Heart right ventricle (tissue), 16 donors: ENCODE measurements at regions of chr3 and their contacts with region 1.

Region 1: GRCh38 chr3:5032844-5033243 is 53.6 kb downstream of the BHLHE40 start:
- DNase-seq: no peak
- ATAC-seq: no peak
- H3K4me3 ChIP-seq: no peak overlapping the region
- H3K27ac ChIP-seq: no peak overlapping the region
- H3K4me1 ChIP-seq: peaks cover 0 to 12% (median 0%) of the 10 kb centered on the region in 9 donors
- H3K27me3 ChIP-seq: no peaks in the 10 kb centered on the region
- CTCF ChIP-seq: no peak

Region 2: DNA sequence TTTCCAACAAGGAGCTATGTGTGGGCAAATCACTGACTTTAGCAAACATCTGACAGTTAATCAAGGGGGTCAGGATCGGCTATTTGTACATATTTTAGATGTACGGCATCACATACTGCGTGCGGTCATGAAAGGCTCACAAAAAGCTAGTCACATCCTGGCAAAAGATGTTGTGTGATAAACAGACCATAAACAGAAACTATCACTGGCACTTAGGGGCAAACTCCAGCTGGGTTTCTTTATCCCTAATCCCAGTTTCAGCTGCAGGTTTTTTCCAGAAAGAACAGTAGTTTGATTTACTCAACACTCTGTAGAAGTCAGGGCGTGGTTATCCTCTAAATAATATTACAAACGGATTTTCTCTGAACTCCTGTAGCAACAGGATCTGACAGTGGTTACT is 166.0 kb before region 1 on chr3:
- intact Hi-C with region 1: loop called in 1 of 10 experiments (anchors 1 kb)
- DNase-seq: peak in 1 of 2 donors; percentile 19
- ATAC-seq: peak in 2 of 8 donors; percentile 1 to 11
- H3K4me3 ChIP-seq: peak overlapping the region in 6 of 10 donors; percentile 48 to 57 (median 56)
- H3K27ac ChIP-seq: peak overlapping the region; percentile 93 to 100 (median 98)
- H3K4me1 ChIP-seq: peaks cover 0 to 42% (median 27%) of the 10 kb centered on the region in 9 donors
- H3K27me3 ChIP-seq: no peaks in the 10 kb centered on the region
- CTCF ChIP-seq: no peak

Region 3: DNA sequence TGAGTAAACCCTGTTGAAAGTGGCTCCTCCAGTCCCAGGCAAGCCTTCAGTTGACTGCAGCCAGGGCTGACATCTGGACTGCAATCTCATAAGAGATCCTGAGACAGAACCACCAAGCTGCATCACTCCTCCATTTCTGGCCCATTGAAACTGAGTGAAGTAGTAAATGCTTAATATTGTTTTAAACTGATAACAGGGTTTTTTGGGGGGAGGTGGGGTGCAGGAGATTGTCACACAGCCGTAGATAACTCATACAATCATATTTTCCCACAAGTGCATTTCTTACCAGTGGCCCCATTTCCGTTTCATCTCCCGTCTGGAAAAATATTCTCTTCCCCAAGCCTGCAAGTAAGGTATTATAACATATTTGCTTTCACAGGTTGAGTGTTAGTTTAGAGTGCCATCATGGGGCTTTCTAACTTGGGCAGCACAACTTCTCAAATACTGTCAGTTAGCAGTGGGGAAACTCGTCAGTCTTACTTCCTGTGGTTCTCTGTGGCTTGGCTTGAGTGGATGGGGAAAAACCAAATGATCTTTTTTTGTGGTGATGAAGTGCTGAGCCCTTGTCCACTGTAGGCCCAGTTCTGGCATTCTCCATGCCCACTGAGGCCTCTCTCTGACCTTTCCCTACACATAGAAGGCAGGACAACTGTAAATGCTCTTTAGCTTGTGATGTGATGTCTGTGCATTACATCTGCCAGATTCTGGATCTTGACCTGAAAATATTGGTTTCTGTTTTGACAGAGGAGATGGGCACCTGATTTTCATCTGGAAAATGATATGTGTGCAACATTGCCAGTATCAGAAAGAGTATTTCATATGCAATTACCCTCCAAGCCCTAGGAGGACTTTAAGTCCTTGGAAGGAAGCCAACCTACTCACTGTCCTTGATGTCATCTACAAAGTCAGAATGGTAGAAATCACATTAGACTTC is 143.7 kb before region 1 on chr3:
- intact Hi-C with region 1: no loop called
- DNase-seq: no peak
- ATAC-seq: peak in 2 of 8 donors; percentile 42 to 58
- H3K4me3 ChIP-seq: no peak overlapping the region
- H3K27ac ChIP-seq: peak overlapping the region in 1 of 10 donors; percentile 44
- H3K4me1 ChIP-seq: peaks cover 0 to 17% (median 0%) of the 10 kb centered on the region in 9 donors
- H3K27me3 ChIP-seq: no peaks in the 10 kb centered on the region
- CTCF ChIP-seq: no peak